PC-9 (cell line): ENCODE measurements at regions of chr5 and their contacts with region 1.

Region 1: GRCh38 chr5:148979104-148979723 is 83.6 kb downstream of the SH3TC2 start:
- DNase-seq: peak; percentile 84 to 85
- H3K4me3 ChIP-seq: peak overlapping the region; percentile 32; the same call in 1 of the 2 replicates
- H3K27ac ChIP-seq: peak overlapping the region; percentile 99
- H3K4me1 ChIP-seq: peaks cover 79% of the 10 kb centered on the region
- H3K27me3 ChIP-seq: no peaks in the 10 kb centered on the region
- CTCF ChIP-seq: no peak

Region 2: GRCh38 chr5:148805326-148806290 is 173.6 kb before region 1 on chr5:
- CTCF ChIA-PET with region 1: no interaction called
- POLR2A ChIA-PET with region 1: no interaction called
- intact Hi-C with region 1: loop called (anchors 5 kb)
- DNase-seq: peak in 1 of 2 experiments; percentile 43
- H3K4me3 ChIP-seq: no peak overlapping the region
- H3K27ac ChIP-seq: no peak overlapping the region
- H3K4me1 ChIP-seq: peaks cover 26% of the 10 kb centered on the region
- H3K27me3 ChIP-seq: no peaks in the 10 kb centered on the region
- CTCF ChIP-seq: no peak